ENCODE measurements at regions of chr12 and their contacts with region 1.

Region 1: GRCh38 chr12:87848248-87848868 is 180.8 kb downstream of the C12orf50 start:
- DNase-seq: no peak
- ATAC-seq: no peak

Region 2: DNA sequence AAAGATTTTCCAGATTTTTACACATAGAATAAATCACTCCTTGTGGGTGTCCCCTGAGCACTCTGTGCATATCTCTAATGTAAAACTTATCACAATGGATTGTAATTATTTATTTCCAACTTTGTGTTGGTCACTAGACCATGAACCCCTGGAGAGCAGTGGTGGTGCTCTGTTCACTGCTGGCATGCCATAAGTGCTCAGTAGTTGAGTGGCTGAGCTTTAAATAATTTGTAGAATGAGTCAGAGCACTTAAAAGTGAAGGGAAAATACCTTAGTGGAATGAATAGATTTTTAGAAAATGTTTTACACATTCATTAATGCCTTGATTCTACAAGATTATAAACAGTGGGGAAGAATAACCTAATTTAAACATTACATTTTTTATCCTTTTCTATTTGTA is 1598.5 kb before region 1 on chr12:
- intact Hi-C with region 1: loop called (anchors 10 kb)
- DNase-seq: no peak
- ATAC-seq: no peak